Mucosa of descending colon (tissue), 3 donors: ENCODE measurements at regions of chr12 and their contacts with region 1.

Region 1: GRCh38 chr12:15532364-15532977 is 210.2 kb downstream of the PTPRO start:
- DNase-seq: peak in 1 of 3 donors; percentile 79
- ATAC-seq: peak; percentile 74
- H3K4me3 ChIP-seq: no peak overlapping the region
- H3K4me1 ChIP-seq: peaks cover 10% of the 10 kb centered on the region
- CTCF ChIP-seq: no peak

Region 2: DNA sequence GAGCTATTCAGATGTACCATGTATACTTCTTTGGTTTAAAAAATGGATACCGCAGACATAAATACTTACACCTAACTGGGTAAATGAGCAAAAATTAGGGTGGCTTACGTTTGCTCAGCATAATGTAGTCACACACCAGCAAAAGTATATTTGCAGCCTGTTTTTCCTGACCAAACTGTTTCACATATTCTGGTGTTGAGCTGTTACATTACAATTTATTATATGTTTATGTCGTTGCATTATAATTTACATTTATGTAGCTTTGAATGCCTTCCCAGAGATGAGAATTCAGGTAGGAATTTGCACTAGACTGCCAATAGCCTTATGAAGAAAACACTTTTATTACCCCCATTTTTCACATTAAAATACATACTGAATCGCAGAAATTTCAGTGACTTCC is 26.9 kb before region 1 on chr12:
- intact Hi-C with region 1: no loop called
- DNase-seq: no peak
- ATAC-seq: no peak
- H3K4me3 ChIP-seq: no peak overlapping the region
- H3K4me1 ChIP-seq: no peaks in the 10 kb centered on the region
- CTCF ChIP-seq: no peak

Region 3: GRCh38 chr12:15584366-15585041 is 52.0 kb after region 1 on chr12:
- intact Hi-C with region 1: loop called in 1 of 2 experiments (anchors 5 kb)
- DNase-seq: peak in 1 of 3 donors; percentile 67
- ATAC-seq: peak; percentile 43
- H3K4me3 ChIP-seq: no peak overlapping the region
- H3K4me1 ChIP-seq: no peaks in the 10 kb centered on the region
- CTCF ChIP-seq: peak; percentile 19